Breast epithelium (tissue), 4 donors: ENCODE measurements at regions of chr3 and their contacts with region 1.

Region 1: DNA sequence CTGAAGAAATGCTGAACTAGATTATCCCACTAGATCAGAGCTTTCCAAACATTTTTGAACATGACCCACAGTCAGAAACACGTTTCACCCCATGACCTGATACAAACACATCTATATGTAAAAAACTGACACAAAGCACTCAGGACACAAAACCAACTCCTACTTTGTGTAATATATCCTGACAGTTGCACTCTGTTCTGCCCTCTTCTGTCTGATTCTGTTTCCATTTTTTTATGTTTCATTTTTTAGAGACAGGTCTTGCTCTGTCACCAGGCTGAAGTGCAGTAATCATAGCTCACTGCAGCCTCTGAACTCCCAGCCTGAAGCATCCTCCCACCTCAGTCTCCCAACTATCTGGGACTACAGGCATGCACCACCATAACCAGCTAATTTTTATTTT is 15.8 kb upstream of the RFTN1 start:
- DNase-seq: no peak
- H3K4me3 ChIP-seq: no peak overlapping the region
- H3K27ac ChIP-seq: no peak overlapping the region
- H3K4me1 ChIP-seq: no peaks in the 10 kb centered on the region
- H3K27me3 ChIP-seq: no peaks in the 10 kb centered on the region
- CTCF ChIP-seq: no peak
- POLR2A ChIP-seq: no peak

Region 2: GRCh38 chr3:16875876-16876550 is 346.7 kb after region 1 on chr3:
- intact Hi-C with region 1: loop called (anchors 5 kb)
- DNase-seq: no peak
- H3K4me3 ChIP-seq: no peak overlapping the region
- H3K27ac ChIP-seq: no peak overlapping the region
- H3K4me1 ChIP-seq: no peaks in the 10 kb centered on the region
- H3K27me3 ChIP-seq: no peaks in the 10 kb centered on the region
- CTCF ChIP-seq: no peak
- POLR2A ChIP-seq: no peak